ENCODE measurements at regions of chr2 and their contacts with region 1.

Region 1: GRCh38 chr2:237714690-237715458 is 83.7 kb upstream of the RBM44 start:
- DNase-seq: peak; percentile 60
- H3K4me3 ChIP-seq: peak overlapping the region in 1 of 3 experiments; percentile 34
- H3K27ac ChIP-seq: peak overlapping the region; percentile 57
- H3K4me1 ChIP-seq: peaks cover 26% of the 10 kb centered on the region
- H3K27me3 ChIP-seq: no peaks in the 10 kb centered on the region
- CTCF ChIP-seq: no peak
- POLR2A ChIP-seq: no peak

Region 2: DNA sequence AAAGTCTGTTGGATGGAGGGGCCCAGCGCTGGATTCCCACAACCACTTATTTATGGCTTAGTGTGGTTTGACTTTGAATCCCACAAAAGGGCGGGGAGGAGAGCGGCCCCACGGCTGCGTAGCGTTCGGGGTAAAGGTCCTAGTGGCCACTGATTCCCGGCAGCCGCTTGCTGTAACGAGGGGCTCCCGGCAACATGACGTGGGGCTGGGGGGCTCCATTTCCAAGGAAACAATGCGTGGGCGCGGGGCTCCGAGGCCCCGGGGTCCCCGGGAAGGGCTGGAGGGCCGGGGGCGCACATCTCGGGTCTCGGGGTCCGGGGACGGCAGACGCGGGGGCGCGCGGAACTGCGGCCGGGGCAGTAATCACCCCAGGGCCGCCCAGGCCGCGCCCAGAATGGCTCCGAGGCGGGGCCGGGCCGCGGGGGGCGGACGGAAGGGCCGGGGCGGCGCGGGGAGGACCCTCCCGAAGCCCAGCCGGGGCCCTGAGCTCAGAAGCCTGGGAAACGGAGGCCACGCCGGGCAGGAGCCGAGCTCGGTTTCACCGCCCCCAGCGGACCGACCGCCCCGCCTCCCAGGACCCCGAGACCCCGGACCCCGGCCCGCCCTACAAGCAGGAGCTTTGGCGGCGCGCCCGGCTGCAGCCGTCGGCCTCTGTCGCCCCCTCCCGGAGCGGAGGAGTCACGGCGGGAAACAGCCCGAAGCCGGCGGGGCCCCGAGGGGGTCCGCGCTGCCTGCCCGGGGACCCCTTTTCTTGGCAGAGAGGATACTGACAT is 239.8 kb before region 1 on chr2:
- CTCF ChIA-PET with region 1: no interaction called
- POLR2A ChIA-PET with region 1: no interaction called
- dilution Hi-C with region 1: no loop called
- intact Hi-C with region 1: no loop called
- DNase-seq: peak; percentile 54
- H3K4me3 ChIP-seq: peak overlapping the region; percentile 38 to 51 (median 40)
- H3K27ac ChIP-seq: peak overlapping the region; percentile 23
- H3K4me1 ChIP-seq: peaks cover 12% of the 10 kb centered on the region
- H3K27me3 ChIP-seq: peaks cover 36 to 42% of the 10 kb centered on the region in 2 experiments
- CTCF ChIP-seq: peak; percentile 73 to 93
- POLR2A ChIP-seq: peak; percentile 23

Region 3: GRCh38 chr2:237650455-237650850 is 64.4 kb before region 1 on chr2:
- CTCF ChIA-PET with region 1: no interaction called
- POLR2A ChIA-PET with region 1: no interaction called
- dilution Hi-C with region 1: no loop called
- intact Hi-C with region 1: no loop called
- DNase-seq: no peak
- H3K4me3 ChIP-seq: no peak overlapping the region
- H3K27ac ChIP-seq: no peak overlapping the region
- H3K4me1 ChIP-seq: peaks cover 2% of the 10 kb centered on the region
- H3K27me3 ChIP-seq: no peaks in the 10 kb centered on the region
- CTCF ChIP-seq: no peak
- POLR2A ChIP-seq: no peak

Region 4: GRCh38 chr2:237731663-237732062 is 16.8 kb after region 1 on chr2:
- CTCF ChIA-PET with region 1: interaction called, 8 read pairs
- POLR2A ChIA-PET with region 1: no interaction called
- dilution Hi-C with region 1: no loop called
- intact Hi-C with region 1: loop called (anchors 1 kb)
- DNase-seq: peak; percentile 78
- H3K4me3 ChIP-seq: no peak overlapping the region
- H3K27ac ChIP-seq: peak overlapping the region; percentile 10
- H3K4me1 ChIP-seq: peaks cover 67% of the 10 kb centered on the region
- H3K27me3 ChIP-seq: no peaks in the 10 kb centered on the region
- CTCF ChIP-seq: no peak
- POLR2A ChIP-seq: no peak

Measured in endothelial cell of umbilical vein (primary cell).